MCF 10A (cell line): ENCODE measurements at regions of chr9 and their contacts with region 1.

Region 1: DNA sequence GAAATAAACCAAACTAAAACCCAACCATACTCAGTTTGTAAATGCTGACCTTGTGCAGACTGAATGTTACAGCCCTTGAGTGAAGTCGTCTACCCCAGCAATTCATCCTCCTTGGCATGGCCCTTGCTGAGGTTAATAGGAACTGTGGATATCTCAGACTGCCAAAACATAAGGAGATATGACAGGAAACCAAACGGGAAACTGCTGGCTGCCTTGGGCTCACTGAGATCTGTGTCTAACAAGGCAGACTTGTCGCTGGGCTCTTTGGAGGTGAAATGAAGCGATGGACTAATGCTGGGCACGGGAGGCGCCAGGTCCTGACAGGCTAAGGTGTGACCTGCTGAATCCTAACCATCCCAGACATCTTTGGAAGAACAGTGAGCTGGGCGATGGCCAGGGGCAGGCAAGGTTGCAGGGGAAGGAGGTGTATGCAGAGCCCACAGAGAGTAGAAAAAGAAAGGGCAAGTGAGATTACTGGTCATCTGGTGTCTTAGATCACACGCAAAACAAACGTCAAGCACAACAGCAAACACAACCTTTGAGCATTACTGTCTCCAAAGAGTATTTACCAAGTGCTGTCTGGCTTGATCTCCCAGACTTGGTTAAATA is 44.6 kb upstream of the ALDH1A1 start:
- DNase-seq: no peak
- H3K4me3 Mint-ChIP-seq: no peak overlapping the region
- H3K27ac Mint-ChIP-seq: no peak overlapping the region
- H3K4me1 Mint-ChIP-seq: no peaks in the 10 kb centered on the region
- H3K27me3 Mint-ChIP-seq: peaks cover 33% of the 10 kb centered on the region
- CTCF ChIP-seq: no peak

Region 2: GRCh38 chr9:72948906-72949582 is 48.4 kb before region 1 on chr9:
- CTCF ChIA-PET with region 1: no interaction called
- POLR2A ChIA-PET with region 1: no interaction called
- intact Hi-C with region 1: loop called (anchors 10 kb)
- DNase-seq: no peak
- H3K4me3 Mint-ChIP-seq: no peak overlapping the region
- H3K27ac Mint-ChIP-seq: no peak overlapping the region
- H3K4me1 Mint-ChIP-seq: no peaks in the 10 kb centered on the region
- H3K27me3 Mint-ChIP-seq: peaks cover 74% of the 10 kb centered on the region
- CTCF ChIP-seq: no peak

Region 3: GRCh38 chr9:73871636-73872035 is 874.1 kb after region 1 on chr9:
- CTCF ChIA-PET with region 1: no interaction called
- POLR2A ChIA-PET with region 1: no interaction called
- intact Hi-C with region 1: no loop called
- DNase-seq: no peak
- H3K4me3 Mint-ChIP-seq: no peak overlapping the region
- H3K27ac Mint-ChIP-seq: no peak overlapping the region
- H3K4me1 Mint-ChIP-seq: peaks cover 11% of the 10 kb centered on the region
- H3K27me3 Mint-ChIP-seq: peaks cover 62% of the 10 kb centered on the region
- CTCF ChIP-seq: no peak